GM12878 (cell line): ENCODE measurements at regions of chr1 and their contacts with region 1.

Region 1: GRCh38 chr1:44213222-44214112 is at the start of gene DMAP1:
- DNase-seq: peak; percentile 46
- ATAC-seq: peak; percentile 89
- H3K4me3 ChIP-seq: peak within 1 kb of the TSS; percentile 99
- H3K27ac ChIP-seq: peak within 1 kb of the TSS; percentile 64
- H3K4me1 ChIP-seq: peaks cover 7% of the 10 kb centered on the region
- H3K27me3 ChIP-seq: no peaks in the 10 kb centered on the region
- CTCF ChIP-seq: peak in 1 of 3 experiments; percentile 10; a peak in 1 of 6 replicates
- EP300 ChIP-seq: no peak
- POLR2A ChIP-seq: peak; percentile 83
- RAD21 ChIP-seq: no peak
- polyA plus RNA-seq, gene DMAP1: 1.9 to 6.1 TPM

Region 2: GRCh38 chr1:44089371-44090049 is 124.0 kb before region 1 on chr1:
- CTCF ChIA-PET with region 1: interaction called, 10 read pairs
- POLR2A ChIA-PET with region 1: no interaction called
- RAD21 ChIA-PET with region 1: interaction called, 4 read pairs
- SMC1A ChIA-PET with region 1: interaction called, 10 read pairs
- in situ Hi-C with region 1: no loop called
- intact Hi-C with region 1: no loop called
- DNase-seq: no peak
- ATAC-seq: no peak
- H3K4me3 ChIP-seq: no peak overlapping the region
- H3K27ac ChIP-seq: no peak overlapping the region
- H3K4me1 ChIP-seq: no peaks in the 10 kb centered on the region
- H3K27me3 ChIP-seq: no peaks in the 10 kb centered on the region
- CTCF ChIP-seq: no peak
- EP300 ChIP-seq: no peak
- POLR2A ChIP-seq: no peak
- RAD21 ChIP-seq: no peak

Region 3: DNA sequence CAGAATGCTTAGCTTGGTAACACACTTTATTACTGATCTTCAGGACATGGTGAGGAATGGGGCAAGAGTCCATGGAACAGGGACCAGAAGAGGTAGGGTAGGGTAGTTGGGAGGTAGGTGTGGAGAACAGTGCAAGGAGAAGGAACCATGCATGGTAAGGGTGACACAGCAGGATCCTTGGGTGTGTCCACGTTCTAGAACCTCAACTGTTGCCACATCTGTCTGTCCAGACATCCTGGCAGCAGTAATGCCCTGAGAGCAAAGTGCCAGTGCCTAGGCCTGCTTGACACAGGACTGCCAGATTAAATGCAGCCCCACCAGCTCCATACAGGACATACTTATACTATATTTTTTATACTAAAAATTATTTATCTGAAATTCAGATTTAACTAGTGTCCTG is 13.7 kb after region 1 on chr1:
- CTCF ChIA-PET with region 1: interaction called, 20 read pairs
- POLR2A ChIA-PET with region 1: no interaction called
- RAD21 ChIA-PET with region 1: interaction called, 3 read pairs
- SMC1A ChIA-PET with region 1: interaction called, 8 read pairs
- in situ Hi-C with region 1: no loop called
- intact Hi-C with region 1: no loop called
- DNase-seq: no peak
- ATAC-seq: no peak
- H3K4me3 ChIP-seq: no peak overlapping the region
- H3K27ac ChIP-seq: no peak overlapping the region
- H3K4me1 ChIP-seq: no peaks in the 10 kb centered on the region
- H3K27me3 ChIP-seq: no peaks in the 10 kb centered on the region
- CTCF ChIP-seq: no peak
- EP300 ChIP-seq: no peak
- POLR2A ChIP-seq: no peak
- RAD21 ChIP-seq: no peak

Region 4: GRCh38 chr1:44237721-44238457 is 24.4 kb after region 1 on chr1:
- CTCF ChIA-PET with region 1: interaction called, 11 read pairs
- POLR2A ChIA-PET with region 1: no interaction called
- RAD21 ChIA-PET with region 1: no interaction called
- SMC1A ChIA-PET with region 1: interaction called, 6 read pairs
- in situ Hi-C with region 1: no loop called
- intact Hi-C with region 1: no loop called
- DNase-seq: no peak
- ATAC-seq: peak; percentile 76
- H3K4me3 ChIP-seq: no peak overlapping the region
- H3K27ac ChIP-seq: no peak overlapping the region
- H3K4me1 ChIP-seq: no peaks in the 10 kb centered on the region
- H3K27me3 ChIP-seq: no peaks in the 10 kb centered on the region
- CTCF ChIP-seq: peak; percentile 40 to 60 (median 58)
- EP300 ChIP-seq: no peak
- POLR2A ChIP-seq: no peak
- RAD21 ChIP-seq: no peak

Region 5: GRCh38 chr1:44318097-44319088 is 104.9 kb after region 1 on chr1:
- CTCF ChIA-PET with region 1: interaction called, 24 read pairs
- POLR2A ChIA-PET with region 1: interaction called, 5 read pairs
- RAD21 ChIA-PET with region 1: interaction called, 10 read pairs
- SMC1A ChIA-PET with region 1: interaction called, 9 read pairs
- in situ Hi-C with region 1: no loop called
- intact Hi-C with region 1: loop called (anchors 1 kb)
- DNase-seq: no peak
- ATAC-seq: peak; percentile 57
- H3K4me3 ChIP-seq: no peak overlapping the region
- H3K27ac ChIP-seq: no peak overlapping the region
- H3K4me1 ChIP-seq: no peaks in the 10 kb centered on the region
- H3K27me3 ChIP-seq: no peaks in the 10 kb centered on the region
- CTCF ChIP-seq: peak; percentile 68 to 86 (median 79)
- EP300 ChIP-seq: no peak
- POLR2A ChIP-seq: no peak
- RAD21 ChIP-seq: peak; percentile 51